PC-9 (cell line): ENCODE measurements at regions of chr9 and their contacts with region 1.

Region 1: DNA sequence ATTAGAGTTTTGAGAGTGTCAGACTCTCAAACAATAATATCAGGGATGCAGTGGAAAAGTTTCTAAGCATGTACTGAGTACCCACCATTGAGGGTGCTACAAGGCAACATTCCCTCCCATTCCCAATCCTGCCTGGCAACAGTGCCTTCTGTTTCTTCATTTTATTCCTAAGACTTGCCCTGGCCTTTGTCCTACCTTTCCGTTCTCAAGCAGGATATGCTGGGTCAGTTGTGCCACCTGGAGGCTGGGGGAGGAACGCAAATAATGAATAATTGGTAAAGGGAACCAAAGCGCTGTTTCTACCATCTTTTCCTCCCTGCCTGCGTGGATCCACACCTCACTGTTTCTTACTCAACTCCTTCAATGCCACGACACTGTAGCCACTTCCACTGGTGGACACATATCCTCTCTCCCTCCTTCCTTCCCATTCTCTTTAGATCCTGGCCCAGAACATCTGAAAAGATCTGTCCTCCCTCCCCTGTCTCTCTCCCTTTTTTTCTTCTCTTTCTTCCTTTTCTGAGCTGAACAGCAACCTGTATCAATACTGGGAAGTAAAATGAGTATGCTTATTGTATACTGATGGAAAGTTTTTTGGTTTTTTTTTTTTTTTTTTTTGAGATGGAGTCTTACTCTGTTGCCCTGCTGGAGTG is 149.5 kb downstream of the C9orf152 start:
- DNase-seq: peak; percentile 54 to 67
- H3K4me3 ChIP-seq: no peak overlapping the region
- H3K27ac ChIP-seq: peak overlapping the region; percentile 8; the same call in 1 of the 2 replicates
- H3K4me1 ChIP-seq: peaks cover 7% of the 10 kb centered on the region
- H3K27me3 ChIP-seq: no peaks in the 10 kb centered on the region
- CTCF ChIP-seq: peak; percentile 77

Region 2: DNA sequence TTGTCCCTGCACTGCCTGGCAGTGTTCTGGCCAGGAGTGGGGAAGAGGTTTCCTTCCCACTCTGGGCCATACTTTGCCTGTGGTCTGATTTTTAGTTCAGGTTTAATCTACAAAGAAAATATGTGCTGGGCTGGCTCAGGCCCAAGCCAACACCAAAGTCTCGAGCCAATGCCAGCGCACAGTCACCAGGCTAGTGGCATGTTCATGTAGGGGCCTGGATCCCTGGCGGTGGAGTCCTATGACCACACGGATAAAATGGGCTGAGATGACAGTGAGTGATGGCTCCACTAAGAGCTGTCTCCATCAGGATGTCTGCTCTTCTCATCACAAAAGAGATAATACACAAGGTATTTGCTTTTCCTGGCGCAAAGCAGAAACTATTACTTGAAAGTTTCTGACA is 467.5 kb before region 1 on chr9:
- CTCF ChIA-PET with region 1: no interaction called
- POLR2A ChIA-PET with region 1: interaction called, 15 read pairs
- intact Hi-C with region 1: no loop called
- DNase-seq: no peak
- H3K4me3 ChIP-seq: no peak overlapping the region
- H3K27ac ChIP-seq: no peak overlapping the region
- H3K4me1 ChIP-seq: peaks cover 6% of the 10 kb centered on the region; the same call in 1 of the 2 replicates
- H3K27me3 ChIP-seq: no peaks in the 10 kb centered on the region
- CTCF ChIP-seq: no peak

Region 3: GRCh38 chr9:109903515-109904138 is 154.8 kb before region 1 on chr9:
- CTCF ChIA-PET with region 1: interaction called, 3 read pairs
- POLR2A ChIA-PET with region 1: no interaction called
- intact Hi-C with region 1: loop called (anchors 1 kb)
- DNase-seq: peak; percentile 68 to 70
- H3K4me3 ChIP-seq: no peak overlapping the region
- H3K27ac ChIP-seq: no peak overlapping the region
- H3K4me1 ChIP-seq: 0 out of 2 replicates have a peak, but pooled peaks cover 3% of the 10 kb centered on the region
- H3K27me3 ChIP-seq: no peaks in the 10 kb centered on the region
- CTCF ChIP-seq: peak; percentile 91

Region 4: GRCh38 chr9:110099236-110100095 is 41.0 kb after region 1 on chr9:
- CTCF ChIA-PET with region 1: no interaction called
- POLR2A ChIA-PET with region 1: no interaction called
- intact Hi-C with region 1: no loop called
- DNase-seq: peak in 1 of 2 experiments; percentile 70
- H3K4me3 ChIP-seq: no peak overlapping the region
- H3K27ac ChIP-seq: peak overlapping the region; percentile 13; the same call in 1 of the 2 replicates
- H3K4me1 ChIP-seq: peaks cover 26% of the 10 kb centered on the region
- H3K27me3 ChIP-seq: no peaks in the 10 kb centered on the region
- CTCF ChIP-seq: no peak

Region 5: GRCh38 chr9:110128664-110129329 is 70.4 kb after region 1 on chr9:
- CTCF ChIA-PET with region 1: no interaction called
- POLR2A ChIA-PET with region 1: no interaction called
- intact Hi-C with region 1: no loop called
- DNase-seq: no peak
- H3K4me3 ChIP-seq: no peak overlapping the region
- H3K27ac ChIP-seq: 0 out of 2 replicates have a peak overlapping the region, but pooled peaks have one; percentile 0
- H3K4me1 ChIP-seq: peaks cover 49% of the 10 kb centered on the region
- H3K27me3 ChIP-seq: no peaks in the 10 kb centered on the region
- CTCF ChIP-seq: no peak

Region 6: DNA sequence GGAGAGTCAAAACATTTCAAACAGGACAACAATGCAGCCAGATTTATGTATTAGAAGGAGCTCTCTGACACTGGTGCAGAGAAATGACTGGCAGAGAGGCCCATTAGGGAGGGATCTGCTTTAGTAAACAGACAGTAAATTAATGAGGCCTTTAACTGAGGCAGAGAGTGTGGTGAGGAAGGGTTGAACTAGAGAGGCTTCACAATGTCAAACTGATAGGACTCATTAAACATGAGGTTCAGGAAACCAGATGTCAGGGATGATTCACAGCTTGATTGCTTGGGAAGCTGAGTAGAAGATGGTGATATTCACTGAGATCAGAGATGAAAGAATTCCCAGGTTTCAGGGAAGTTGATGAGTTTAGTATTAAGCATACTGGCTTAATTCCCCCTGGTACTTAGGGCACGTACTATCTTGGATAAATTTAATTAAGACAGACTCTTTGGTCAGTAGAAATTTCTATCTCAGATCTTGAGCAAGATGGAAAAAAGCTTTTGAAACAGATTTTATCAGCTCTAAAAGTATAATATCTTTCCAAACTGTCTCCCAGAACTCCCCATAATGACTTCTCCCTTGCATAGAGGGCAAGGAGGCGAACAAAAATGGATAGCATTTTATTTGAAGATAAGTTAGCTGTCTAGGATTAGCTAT is 601.6 kb after region 1 on chr9:
- CTCF ChIA-PET with region 1: no interaction called
- POLR2A ChIA-PET with region 1: no interaction called
- intact Hi-C with region 1: no loop called
- DNase-seq: no peak
- H3K4me3 ChIP-seq: no peak overlapping the region
- H3K27ac ChIP-seq: no peak overlapping the region
- H3K4me1 ChIP-seq: no peaks in the 10 kb centered on the region
- H3K27me3 ChIP-seq: no peaks in the 10 kb centered on the region
- CTCF ChIP-seq: no peak